GM12878 (cell line): ENCODE measurements at regions of chr12 and their contacts with region 1.

Region 1: DNA sequence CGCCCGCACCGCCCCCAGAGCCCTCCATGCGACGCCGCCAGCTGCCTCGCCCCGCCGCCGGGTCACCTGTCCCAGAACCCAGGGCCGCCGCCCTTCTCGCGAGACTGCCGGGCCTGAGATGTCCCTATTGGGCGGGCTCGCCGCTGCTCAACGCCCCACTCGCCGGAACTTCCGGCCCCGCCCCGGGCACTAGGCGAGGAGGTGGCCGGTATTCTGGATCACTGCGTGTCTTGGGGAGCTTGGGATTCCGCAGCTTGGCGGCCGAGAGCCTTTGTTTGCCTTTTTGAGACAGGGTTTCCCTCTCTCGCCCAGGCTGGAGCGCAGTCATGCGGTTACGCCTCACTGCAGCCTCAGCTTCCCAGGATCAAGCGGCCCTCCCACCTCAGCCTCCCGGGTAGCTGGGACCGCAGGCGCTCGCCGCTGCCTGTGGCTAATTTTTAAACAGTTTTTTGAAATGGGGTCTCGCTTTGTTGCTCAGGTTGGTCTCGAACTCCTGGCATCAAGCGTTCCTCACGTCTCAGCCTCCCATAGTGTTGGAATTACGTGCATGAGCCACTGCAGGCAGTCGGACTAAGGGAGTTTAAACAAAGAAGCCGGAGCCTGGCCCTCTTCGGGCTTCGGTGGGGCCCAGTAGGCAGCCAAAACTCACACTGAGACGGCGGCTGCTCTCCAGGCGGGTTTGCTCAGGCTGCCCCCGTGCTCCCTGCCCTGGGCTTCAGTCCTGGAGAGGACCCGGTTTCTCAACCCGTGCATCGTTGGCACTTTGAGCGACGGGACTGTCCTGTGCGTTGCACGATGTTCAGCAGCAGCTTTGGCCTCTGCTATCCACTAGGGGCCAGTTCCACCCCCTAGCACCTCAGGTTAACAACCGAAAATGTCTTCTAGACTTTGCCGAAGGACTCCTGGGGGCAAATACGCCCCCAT is at the start of gene SLC15A4:
- DNase-seq: no peak
- ATAC-seq: peak; percentile 72
- H3K4me3 ChIP-seq: peak within 1 kb of the TSS; percentile 98
- H3K27ac ChIP-seq: peak within 1 kb of the TSS; percentile 94
- H3K4me1 ChIP-seq: peaks cover 25% of the 10 kb centered on the region
- H3K27me3 ChIP-seq: no peaks in the 10 kb centered on the region
- CTCF ChIP-seq: peak; percentile 27 to 55 (median 36); a peak in 4 of 6 replicates
- EP300 ChIP-seq: no peak; a peak in 1 of 4 replicates
- POLR2A ChIP-seq: peak; percentile 77
- RAD21 ChIP-seq: peak; percentile 29; the same call in 1 of the 2 replicates
- polyA plus RNA-seq, gene SLC15A4: 17.6 to 24.7 TPM

Region 2: DNA sequence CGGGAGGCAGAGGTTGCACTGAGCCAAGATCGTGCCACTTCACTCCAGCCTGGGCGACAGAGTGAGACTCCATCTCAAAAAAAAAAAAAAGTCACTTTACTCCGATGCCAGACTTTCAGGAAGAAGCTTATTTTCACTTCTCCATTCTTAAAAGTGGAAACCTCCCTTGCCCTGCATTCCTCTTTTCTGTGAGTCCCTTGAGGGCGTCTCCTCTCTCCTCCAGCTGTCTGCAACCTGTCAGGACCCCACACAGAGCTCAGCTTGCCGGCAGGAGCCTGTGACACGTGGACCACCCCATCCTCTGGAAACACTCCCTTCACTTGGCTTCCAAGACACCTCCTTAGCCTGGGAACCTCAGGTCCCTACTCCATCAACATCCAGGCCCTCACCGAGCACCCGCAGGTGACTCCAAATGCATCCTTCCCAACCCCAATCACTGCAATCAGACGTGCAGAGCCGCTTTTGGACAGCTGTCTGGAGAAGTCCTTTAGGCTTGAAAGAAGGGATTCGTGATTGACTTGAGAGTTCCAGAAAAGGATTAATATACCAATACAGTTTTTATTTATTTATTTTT is 34.7 kb before region 1 on chr12:
- CTCF ChIA-PET with region 1: interaction called, 51 read pairs
- POLR2A ChIA-PET with region 1: interaction called, 137 read pairs
- RAD21 ChIA-PET with region 1: interaction called, 125 read pairs
- SMC1A ChIA-PET with region 1: interaction called, 112 read pairs
- in situ Hi-C with region 1: no loop called
- intact Hi-C with region 1: no loop called
- DNase-seq: no peak
- ATAC-seq: peak; percentile 43
- H3K4me3 ChIP-seq: no peak overlapping the region
- H3K27ac ChIP-seq: no peak overlapping the region
- H3K4me1 ChIP-seq: peaks cover 14% of the 10 kb centered on the region
- H3K27me3 ChIP-seq: no peaks in the 10 kb centered on the region
- CTCF ChIP-seq: no peak
- EP300 ChIP-seq: no peak
- POLR2A ChIP-seq: no peak
- RAD21 ChIP-seq: no peak

Region 3: GRCh38 chr12:128803788-128804187 is 20.4 kb before region 1 on chr12:
- CTCF ChIA-PET with region 1: interaction called, 51 read pairs
- POLR2A ChIA-PET with region 1: interaction called, 137 read pairs
- RAD21 ChIA-PET with region 1: interaction called, 125 read pairs
- SMC1A ChIA-PET with region 1: interaction called, 112 read pairs
- in situ Hi-C with region 1: no loop called
- intact Hi-C with region 1: no loop called
- DNase-seq: no peak
- ATAC-seq: no peak
- H3K4me3 ChIP-seq: no peak overlapping the region
- H3K27ac ChIP-seq: no peak overlapping the region
- H3K4me1 ChIP-seq: peaks cover 28% of the 10 kb centered on the region
- H3K27me3 ChIP-seq: no peaks in the 10 kb centered on the region
- CTCF ChIP-seq: no peak
- EP300 ChIP-seq: no peak
- POLR2A ChIP-seq: no peak
- RAD21 ChIP-seq: no peak

Region 4: DNA sequence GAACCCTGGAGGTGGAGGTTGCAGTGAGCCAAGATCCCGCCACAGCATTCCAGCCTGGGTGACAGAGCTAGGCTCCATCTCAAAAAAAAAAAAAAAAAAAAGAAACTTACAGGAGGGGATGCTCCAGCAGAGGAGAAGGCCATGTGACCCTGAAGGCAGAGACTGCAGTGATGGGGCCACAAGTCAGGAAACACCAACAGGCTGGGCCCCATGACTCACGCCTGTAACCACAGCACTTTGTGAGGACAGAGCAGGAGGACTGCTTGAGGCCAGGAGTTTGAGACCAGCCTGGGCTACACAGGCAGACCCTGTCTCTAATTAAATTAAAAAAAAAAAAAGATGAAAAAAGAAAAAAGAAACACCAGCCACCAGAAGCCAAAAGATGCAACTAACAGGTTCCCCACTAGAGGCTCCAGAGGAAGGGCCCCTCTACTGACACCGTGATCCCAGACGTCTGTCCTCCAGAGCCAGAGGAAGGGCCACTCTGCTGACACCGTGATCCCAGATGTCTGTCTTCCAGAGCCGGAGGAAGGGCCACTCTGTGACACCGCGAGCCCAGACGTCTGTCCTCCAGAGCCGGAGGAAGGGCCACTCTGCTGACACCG is 20.0 kb after region 1 on chr12:
- CTCF ChIA-PET with region 1: no interaction called
- POLR2A ChIA-PET with region 1: interaction called, 20 read pairs
- RAD21 ChIA-PET with region 1: interaction called, 20 read pairs
- SMC1A ChIA-PET with region 1: interaction called, 47 read pairs
- in situ Hi-C with region 1: no loop called
- intact Hi-C with region 1: no loop called
- DNase-seq: no peak
- ATAC-seq: peak; percentile 73
- H3K4me3 ChIP-seq: no peak overlapping the region
- H3K27ac ChIP-seq: no peak overlapping the region
- H3K4me1 ChIP-seq: peaks cover 32% of the 10 kb centered on the region
- H3K27me3 ChIP-seq: no peaks in the 10 kb centered on the region
- CTCF ChIP-seq: peak; percentile 24 to 44 (median 25); a peak in 3 of 6 replicates
- EP300 ChIP-seq: no peak
- POLR2A ChIP-seq: no peak
- RAD21 ChIP-seq: peak; percentile 40

Region 5: GRCh38 chr12:128914908-128915563 is 90.9 kb after region 1 on chr12:
- CTCF ChIA-PET with region 1: interaction called, 9 read pairs
- POLR2A ChIA-PET with region 1: interaction called, 17 read pairs
- RAD21 ChIA-PET with region 1: interaction called, 35 read pairs
- SMC1A ChIA-PET with region 1: interaction called, 36 read pairs
- in situ Hi-C with region 1: no loop called
- intact Hi-C with region 1: no loop called
- DNase-seq: peak; percentile 88
- ATAC-seq: peak; percentile 95
- H3K4me3 ChIP-seq: no peak overlapping the region
- H3K27ac ChIP-seq: no peak overlapping the region
- H3K4me1 ChIP-seq: peaks cover 9% of the 10 kb centered on the region; the same call in 1 of the 2 replicates
- H3K27me3 ChIP-seq: no peaks in the 10 kb centered on the region
- CTCF ChIP-seq: no peak
- EP300 ChIP-seq: peak; percentile 95 to 98
- POLR2A ChIP-seq: no peak
- RAD21 ChIP-seq: no peak

Region 6: DNA sequence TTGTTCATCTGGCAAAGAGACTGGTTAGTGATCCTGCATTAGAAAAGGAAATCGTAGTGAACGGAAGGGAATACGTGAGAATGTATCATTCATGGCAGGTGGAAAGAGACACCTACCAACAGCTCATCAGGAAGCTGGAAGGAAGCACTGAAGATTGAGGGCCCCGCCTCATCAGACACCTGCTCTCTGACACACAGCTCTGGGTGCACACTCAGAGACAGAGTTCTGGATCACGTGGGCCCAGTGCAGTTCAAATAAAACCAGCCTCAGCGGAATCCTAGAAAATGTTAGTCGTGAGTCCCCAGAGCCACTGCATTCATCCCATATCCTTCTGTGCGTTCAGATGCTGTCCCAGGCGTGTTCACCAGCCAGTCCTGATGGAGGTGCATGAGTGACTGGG is 158.8 kb after region 1 on chr12:
- CTCF ChIA-PET with region 1: no interaction called
- POLR2A ChIA-PET with region 1: no interaction called
- RAD21 ChIA-PET with region 1: no interaction called
- SMC1A ChIA-PET with region 1: no interaction called
- in situ Hi-C with region 1: no loop called
- intact Hi-C with region 1: no loop called
- DNase-seq: no peak
- ATAC-seq: no peak
- H3K4me3 ChIP-seq: no peak overlapping the region
- H3K27ac ChIP-seq: no peak overlapping the region
- H3K4me1 ChIP-seq: no peaks in the 10 kb centered on the region
- H3K27me3 ChIP-seq: no peaks in the 10 kb centered on the region
- CTCF ChIP-seq: no peak
- EP300 ChIP-seq: no peak
- POLR2A ChIP-seq: no peak
- RAD21 ChIP-seq: no peak